Head of caudate nucleus (tissue), 42 donors: ENCODE measurements at regions of chr20 and their contacts with region 1.

Region 1: GRCh38 chr20:4607287-4607713 is 114.4 kb upstream of the PRND start:
- DNase-seq: peak in 40 of 42 donors; percentile 21 to 89 (median 68)

Region 2: GRCh38 chr20:4720041-4720976 is 113.0 kb after region 1 on chr20:
- intact Hi-C with region 1: loop called (anchors 2 kb)
- DNase-seq: peak; percentile 74 to 94 (median 86)

Region 3: DNA sequence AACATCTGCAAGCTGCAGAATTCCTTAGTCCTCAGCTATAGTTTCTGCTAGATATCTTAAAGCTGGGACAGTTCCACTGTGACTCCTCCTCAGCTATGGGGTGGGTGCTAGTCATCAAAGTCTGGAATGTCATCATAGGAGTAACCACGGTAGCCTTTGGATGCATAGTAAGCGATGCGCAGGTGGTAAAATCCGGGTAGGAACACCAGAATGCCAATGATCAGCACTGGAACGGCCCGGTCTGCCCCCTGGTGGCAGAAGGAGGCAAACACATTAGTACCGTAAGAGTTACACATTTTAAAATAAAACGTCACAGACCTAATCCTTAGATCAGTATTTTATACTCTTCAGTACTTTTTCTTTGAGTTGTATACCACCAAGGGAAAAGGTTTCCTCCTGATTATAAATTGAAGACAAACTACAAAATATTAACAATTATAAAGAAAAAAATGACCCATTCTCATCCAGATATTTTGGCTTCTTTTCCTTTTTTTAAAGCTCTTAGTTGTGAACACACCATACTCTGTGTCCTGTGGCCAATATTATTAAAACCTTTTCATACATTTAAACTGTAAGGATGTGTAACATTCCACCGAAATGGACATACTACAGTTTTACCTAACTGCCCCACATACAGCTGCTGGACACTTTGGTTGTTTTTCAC is 493.5 kb after region 1 on chr20:
- intact Hi-C with region 1: loop called (anchors 10 kb)
- DNase-seq: peak; percentile 60 to 95 (median 86)